Gastrocnemius medialis (tissue), 4 donors: ENCODE measurements at regions of chr15 and their contacts with region 1.

Region 1: GRCh38 chr15:93109336-93110102 is 20.5 kb upstream of the RGMA start:
- DNase-seq: no peak
- ATAC-seq: no peak
- H3K4me3 ChIP-seq: no peak overlapping the region
- H3K27ac ChIP-seq: no peak overlapping the region
- H3K4me1 ChIP-seq: peaks cover 0 to under 1% of the 10 kb centered on the region in 2 donors
- H3K27me3 ChIP-seq: no peaks in the 10 kb centered on the region
- CTCF ChIP-seq: no peak
- POLR2A ChIP-seq: no peak

Region 2: GRCh38 chr15:93158104-93158900 is 48.8 kb after region 1 on chr15:
- in situ Hi-C with region 1: no loop called
- intact Hi-C with region 1: loop called (anchors 5 kb)
- DNase-seq: peak; percentile 48 to 71
- ATAC-seq: peak; percentile 87 to 90
- H3K4me3 ChIP-seq: no peak overlapping the region
- H3K27ac ChIP-seq: peak overlapping the region; percentile 59 to 64 (median 61)
- H3K4me1 ChIP-seq: peaks cover 10 to 16% of the 10 kb centered on the region in 2 donors
- H3K27me3 ChIP-seq: no peaks in the 10 kb centered on the region
- CTCF ChIP-seq: no peak
- POLR2A ChIP-seq: no peak